A549 (cell line): ENCODE measurements at regions of chr21 and their contacts with region 1.

Region 1: DNA sequence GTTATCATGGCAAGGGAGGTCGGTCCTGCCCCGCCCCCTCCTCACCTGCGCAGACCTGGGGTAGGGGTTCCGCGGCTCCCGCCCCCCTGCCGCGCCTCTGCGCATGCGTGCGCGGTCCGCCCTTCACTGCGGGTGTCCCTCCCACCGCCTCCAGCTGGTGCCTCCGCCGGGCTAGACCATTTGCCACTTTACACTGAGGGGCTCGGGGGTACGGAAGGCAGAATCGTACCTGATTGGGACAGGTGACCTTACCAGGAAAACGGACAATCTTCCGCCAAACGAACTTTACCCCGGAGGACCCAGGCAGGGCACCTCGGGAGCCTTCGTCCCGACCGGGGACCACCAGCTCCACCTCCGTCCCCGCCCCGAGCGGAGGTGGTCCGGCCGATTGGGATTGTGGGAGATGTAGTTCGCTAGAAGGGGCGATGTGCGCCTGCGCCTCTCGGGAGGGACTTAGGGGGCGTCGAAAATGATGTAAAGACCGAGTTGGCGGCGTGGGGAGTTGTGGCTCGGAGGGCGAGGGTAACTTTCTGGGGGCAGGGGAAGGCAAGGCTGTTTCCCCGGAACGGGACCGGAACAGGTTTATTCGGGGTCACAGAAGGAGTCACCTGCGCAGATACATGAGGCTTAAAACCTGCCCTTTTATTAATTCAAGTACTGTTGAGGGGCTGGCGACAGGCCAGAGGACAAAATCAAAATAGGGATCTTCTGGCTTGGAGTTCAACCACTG is at the start of gene DNAJC28:
- DNase-seq: peak; percentile 63 to 88
- ATAC-seq: peak; percentile 94 to 98
- H3K4me3 ChIP-seq: peak within 1 kb of the TSS; percentile 56
- H3K27ac ChIP-seq: peak within 1 kb of the TSS; percentile 76 to 86
- H3K4me1 ChIP-seq: peaks cover 4% of the 10 kb centered on the region; the same call in 1 of the 3 replicates
- CTCF ChIP-seq: no peak
- EP300 ChIP-seq: no peak
- POLR2A ChIP-seq: peak; percentile 54
- RAD21 ChIP-seq: no peak
- polyA plus RNA-seq, gene DNAJC28: 0.83 and 1.1 TPM in 2 replicates

Region 2: GRCh38 chr21:33479679-33480480 is 11.7 kb before region 1 on chr21 and contains the start of gene TMEM50B:
- CTCF ChIA-PET with region 1: interaction called, 11 read pairs
- POLR2A ChIA-PET with region 1: interaction called, 49 read pairs
- DNase-seq: peak; percentile 79 to 90
- ATAC-seq: peak; percentile 95 to 96
- H3K4me3 ChIP-seq: peak within 1 kb of the TSS; percentile 56
- H3K27ac ChIP-seq: peak within 1 kb of the TSS; percentile 78 to 91
- H3K4me1 ChIP-seq: peaks cover 5% of the 10 kb centered on the region; the same call in 1 of the 3 replicates
- CTCF ChIP-seq: no peak
- EP300 ChIP-seq: no peak
- POLR2A ChIP-seq: peak; percentile 93
- RAD21 ChIP-seq: no peak
- polyA plus RNA-seq, gene TMEM50B: 17.6 and 19.4 TPM in 2 replicates

Region 3: GRCh38 chr21:33566514-33566913 is 75.0 kb after region 1 on chr21:
- CTCF ChIA-PET with region 1: no interaction called
- POLR2A ChIA-PET with region 1: no interaction called
- DNase-seq: no peak
- ATAC-seq: no peak
- H3K4me3 ChIP-seq: no peak overlapping the region
- H3K27ac ChIP-seq: no peak overlapping the region
- H3K4me1 ChIP-seq: no peaks in the 10 kb centered on the region
- CTCF ChIP-seq: no peak
- EP300 ChIP-seq: no peak
- POLR2A ChIP-seq: no peak
- RAD21 ChIP-seq: no peak